PC-3 (cell line): ENCODE measurements at regions of chr3 and their contacts with region 1.

Region 1: DNA sequence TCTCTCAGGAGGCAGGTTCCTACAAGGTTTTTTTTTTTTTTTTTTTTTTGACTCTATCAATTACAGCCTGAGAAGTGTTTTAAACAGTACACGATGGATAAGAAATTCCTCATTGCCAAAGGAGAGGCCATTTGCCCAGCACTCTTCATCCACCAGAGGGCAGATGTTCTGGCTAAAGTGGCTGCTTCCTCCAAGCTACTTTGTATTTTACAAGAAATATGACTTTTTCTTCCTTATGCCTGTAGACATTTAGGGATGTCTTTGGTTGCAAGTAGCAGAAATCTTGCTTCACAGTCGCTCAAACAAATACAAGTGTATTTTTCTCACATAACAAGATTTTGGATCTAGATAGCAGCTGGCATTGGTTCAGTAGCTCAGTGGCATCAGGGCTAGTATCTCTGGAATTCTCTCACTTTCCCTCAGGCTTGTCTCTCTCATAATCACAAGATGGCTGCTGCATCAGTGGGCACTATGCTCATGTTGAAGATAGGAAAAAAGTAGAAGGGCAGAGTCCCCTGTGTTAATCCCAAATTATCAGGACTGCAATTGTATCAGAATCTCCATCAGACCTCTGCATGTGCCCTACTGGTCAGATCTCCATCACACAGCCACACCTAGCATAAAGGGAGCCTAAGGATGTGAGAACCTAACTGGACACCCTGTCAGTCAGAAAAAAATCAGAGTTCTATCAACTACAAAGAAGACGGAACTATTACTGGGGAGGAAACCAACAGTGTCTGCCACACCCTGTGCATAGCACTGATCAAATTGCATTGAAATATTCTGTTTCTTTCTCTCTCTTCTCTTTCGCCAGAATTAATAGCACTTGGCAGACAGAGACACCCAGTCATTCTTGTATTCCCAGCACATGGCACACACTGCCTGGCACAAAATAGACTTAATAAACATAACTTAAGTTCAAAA is 138.9 kb upstream of the COL8A1 start:
- DNase-seq: peak; percentile 77
- ATAC-seq: peak; percentile 81
- H3K4me3 ChIP-seq: no peak overlapping the region
- H3K27ac ChIP-seq: no peak overlapping the region
- H3K4me1 ChIP-seq: peaks cover 18% of the 10 kb centered on the region
- H3K27me3 ChIP-seq: no peaks in the 10 kb centered on the region
- CTCF ChIP-seq: peak; percentile 94

Region 2: GRCh38 chr3:99686955-99687612 is 187.6 kb after region 1 on chr3:
- CTCF ChIA-PET with region 1: interaction called, 3 read pairs
- POLR2A ChIA-PET with region 1: no interaction called
- intact Hi-C with region 1: loop called (anchors 1 kb)
- DNase-seq: peak; percentile 82
- ATAC-seq: peak; percentile 82
- H3K4me3 ChIP-seq: no peak overlapping the region
- H3K27ac ChIP-seq: no peak overlapping the region
- H3K4me1 ChIP-seq: no peaks in the 10 kb centered on the region
- H3K27me3 ChIP-seq: no peaks in the 10 kb centered on the region
- CTCF ChIP-seq: peak; percentile 89